ENCODE measurements at regions of chr3 and their contacts with region 1.

Region 1: GRCh38 chr3:15205934-15206661 is at the start of gene CAPN7:
- DNase-seq: peak; percentile 85
- ATAC-seq: peak; percentile 91
- H3K4me3 ChIP-seq: peak within 1 kb of the TSS; percentile 76 to 90 (median 87)
- H3K27ac ChIP-seq: peak within 1 kb of the TSS; percentile 94
- H3K4me1 ChIP-seq: peaks cover 51% of the 10 kb centered on the region
- H3K27me3 ChIP-seq: no peaks in the 10 kb centered on the region
- CTCF ChIP-seq: peak; percentile 70
- EP300 ChIP-seq: 0 out of 4 replicates have a peak, but pooled peaks of 1 of the 2 experiments have one; percentile 23
- POLR2A ChIP-seq: peak; percentile 83 to 91
- RAD21 ChIP-seq: peak; percentile 23
- total RNA-seq, gene CAPN7: 36.8 and 52.2 TPM in 2 replicates

Region 2: GRCh38 chr3:14947886-14948555 is 258.1 kb before region 1 on chr3:
- CTCF ChIA-PET with region 1: no interaction called
- POLR2A ChIA-PET with region 1: no interaction called
- in situ Hi-C with region 1: no loop called
- intact Hi-C with region 1: loop called (anchors 10 kb)
- DNase-seq: peak; percentile 89
- ATAC-seq: peak; percentile 96
- H3K4me3 ChIP-seq: peak overlapping the region; percentile 79 to 97 (median 95); a peak in 5 of 6 replicates
- H3K27ac ChIP-seq: peak overlapping the region; percentile 91
- H3K4me1 ChIP-seq: peaks cover 50% of the 10 kb centered on the region
- H3K27me3 ChIP-seq: no peaks in the 10 kb centered on the region
- CTCF ChIP-seq: no peak
- EP300 ChIP-seq: 0 out of 4 replicates have a peak, but pooled peaks of 1 of the 2 experiments have one; percentile 11
- POLR2A ChIP-seq: peak; percentile 5 to 48
- RAD21 ChIP-seq: no peak

Region 3: DNA sequence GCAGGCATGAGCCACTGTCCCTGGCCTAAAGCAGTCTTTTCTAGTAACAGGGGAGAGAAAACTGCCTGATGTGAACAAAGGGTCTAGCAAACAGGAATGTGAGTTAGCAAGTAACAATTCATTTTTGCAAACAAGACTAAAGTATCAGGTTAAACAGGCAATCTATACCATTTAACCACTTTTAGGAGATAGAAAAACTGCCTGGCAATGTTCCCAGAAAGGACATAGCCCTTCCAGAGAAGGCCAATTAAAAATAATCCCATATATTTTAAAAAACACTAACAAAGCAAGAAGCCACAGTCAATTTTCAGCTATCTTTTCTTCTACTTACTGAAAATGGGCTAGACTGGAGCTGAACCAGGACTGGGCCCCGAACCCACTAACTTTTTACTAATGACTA is 113.4 kb before region 1 on chr3:
- CTCF ChIA-PET with region 1: no interaction called
- POLR2A ChIA-PET with region 1: no interaction called
- in situ Hi-C with region 1: no loop called
- intact Hi-C with region 1: no loop called
- DNase-seq: no peak
- ATAC-seq: no peak
- H3K4me3 ChIP-seq: no peak overlapping the region
- H3K27ac ChIP-seq: no peak overlapping the region
- H3K4me1 ChIP-seq: peaks cover 4% of the 10 kb centered on the region
- H3K27me3 ChIP-seq: no peaks in the 10 kb centered on the region; a peak in 1 of 5 replicates
- CTCF ChIP-seq: no peak
- EP300 ChIP-seq: no peak
- POLR2A ChIP-seq: no peak
- RAD21 ChIP-seq: no peak

Region 4: GRCh38 chr3:15113463-15113862 is 92.6 kb before region 1 on chr3:
- CTCF ChIA-PET with region 1: no interaction called
- POLR2A ChIA-PET with region 1: interaction called, 13 read pairs
- in situ Hi-C with region 1: loop called (anchors 10 kb)
- intact Hi-C with region 1: loop called (anchors 5 kb)
- DNase-seq: no peak
- ATAC-seq: no peak
- H3K4me3 ChIP-seq: no peak overlapping the region
- H3K27ac ChIP-seq: no peak overlapping the region
- H3K4me1 ChIP-seq: peaks cover 16% of the 10 kb centered on the region
- H3K27me3 ChIP-seq: peaks cover 0 to 2% of the 10 kb centered on the region in 2 experiments; a peak in 1 of 5 replicates
- CTCF ChIP-seq: no peak
- EP300 ChIP-seq: no peak
- POLR2A ChIP-seq: no peak
- RAD21 ChIP-seq: no peak

Region 5: GRCh38 chr3:15160662-15161061 is 45.4 kb before region 1 on chr3:
- CTCF ChIA-PET with region 1: no interaction called
- POLR2A ChIA-PET with region 1: no interaction called
- in situ Hi-C with region 1: no loop called
- intact Hi-C with region 1: no loop called
- DNase-seq: no peak
- ATAC-seq: no peak
- H3K4me3 ChIP-seq: no peak overlapping the region
- H3K27ac ChIP-seq: no peak overlapping the region
- H3K4me1 ChIP-seq: peaks cover 28% of the 10 kb centered on the region
- H3K27me3 ChIP-seq: no peaks in the 10 kb centered on the region
- CTCF ChIP-seq: no peak
- EP300 ChIP-seq: no peak
- POLR2A ChIP-seq: no peak
- RAD21 ChIP-seq: no peak

Region 6: GRCh38 chr3:15171096-15171495 is 35.0 kb before region 1 on chr3:
- CTCF ChIA-PET with region 1: no interaction called
- POLR2A ChIA-PET with region 1: interaction called, 5 read pairs
- in situ Hi-C with region 1: no loop called
- intact Hi-C with region 1: loop called (anchors 5 kb)
- DNase-seq: peak; percentile 98
- ATAC-seq: peak; percentile 100
- H3K4me3 ChIP-seq: peak overlapping the region in 2 of 3 experiments; percentile 6 to 19; a peak in 1 of 6 replicates
- H3K27ac ChIP-seq: peak overlapping the region; percentile 76
- H3K4me1 ChIP-seq: peaks cover 55% of the 10 kb centered on the region
- H3K27me3 ChIP-seq: no peaks in the 10 kb centered on the region
- CTCF ChIP-seq: no peak
- EP300 ChIP-seq: peak; percentile 89 to 97
- POLR2A ChIP-seq: no peak
- RAD21 ChIP-seq: no peak

Region 7: DNA sequence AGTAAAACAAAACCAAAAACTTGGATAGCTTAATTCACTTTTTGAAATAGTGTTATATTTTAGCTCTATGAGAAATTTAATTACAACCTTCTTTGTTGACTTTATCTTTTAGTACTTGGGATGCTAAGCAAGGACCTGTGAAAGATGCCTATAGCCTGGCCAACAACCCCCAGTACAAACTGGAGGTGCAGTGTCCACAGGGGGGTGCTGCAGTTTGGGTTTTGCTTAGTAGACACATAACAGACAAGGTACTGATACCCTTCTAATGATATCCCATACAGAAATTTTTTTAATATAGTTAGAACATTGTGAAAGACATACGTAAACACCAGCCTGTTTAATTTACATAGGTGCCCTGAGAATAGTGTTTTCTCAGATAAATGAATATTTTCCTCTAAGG is 35.2 kb after region 1 on chr3:
- CTCF ChIA-PET with region 1: no interaction called
- POLR2A ChIA-PET with region 1: no interaction called
- in situ Hi-C with region 1: no loop called
- intact Hi-C with region 1: loop called (anchors 5 kb)
- DNase-seq: no peak
- ATAC-seq: peak; percentile 70
- H3K4me3 ChIP-seq: no peak overlapping the region
- H3K27ac ChIP-seq: no peak overlapping the region
- H3K4me1 ChIP-seq: no peaks in the 10 kb centered on the region
- H3K27me3 ChIP-seq: no peaks in the 10 kb centered on the region
- CTCF ChIP-seq: peak; percentile 32; the same call in 1 of the 2 replicates
- EP300 ChIP-seq: no peak
- POLR2A ChIP-seq: no peak
- RAD21 ChIP-seq: no peak

Region 8: GRCh38 chr3:15385901-15386653 is 180.0 kb after region 1 on chr3:
- CTCF ChIA-PET with region 1: no interaction called
- POLR2A ChIA-PET with region 1: no interaction called
- in situ Hi-C with region 1: no loop called
- intact Hi-C with region 1: no loop called
- DNase-seq: no peak
- ATAC-seq: no peak
- H3K4me3 ChIP-seq: no peak overlapping the region
- H3K27ac ChIP-seq: no peak overlapping the region
- H3K4me1 ChIP-seq: 0 out of 2 replicates have a peak, but pooled peaks cover 5% of the 10 kb centered on the region
- H3K27me3 ChIP-seq: no peaks in the 10 kb centered on the region
- CTCF ChIP-seq: no peak
- EP300 ChIP-seq: no peak
- POLR2A ChIP-seq: no peak
- RAD21 ChIP-seq: no peak

Region 9: GRCh38 chr3:15405448-15406050 is 199.5 kb after region 1 on chr3:
- CTCF ChIA-PET with region 1: interaction called, 7 read pairs
- POLR2A ChIA-PET with region 1: no interaction called
- in situ Hi-C with region 1: loop called (anchors 10 kb)
- intact Hi-C with region 1: loop called (anchors 10 kb)
- DNase-seq: peak; percentile 40
- ATAC-seq: peak; percentile 69
- H3K4me3 ChIP-seq: no peak overlapping the region
- H3K27ac ChIP-seq: no peak overlapping the region
- H3K4me1 ChIP-seq: no peaks in the 10 kb centered on the region
- H3K27me3 ChIP-seq: no peaks in the 10 kb centered on the region
- CTCF ChIP-seq: peak; percentile 44; the same call in 1 of the 2 replicates
- EP300 ChIP-seq: no peak
- POLR2A ChIP-seq: no peak
- RAD21 ChIP-seq: no peak